ENCODE measurements at regions of chr6 and their contacts with region 1.

Region 1: GRCh38 chr6:116217069-116217468 is 36.8 kb downstream of the TSPYL4 start:
- DNase-seq: no peak
- ATAC-seq: peak; percentile 65

Region 2: DNA sequence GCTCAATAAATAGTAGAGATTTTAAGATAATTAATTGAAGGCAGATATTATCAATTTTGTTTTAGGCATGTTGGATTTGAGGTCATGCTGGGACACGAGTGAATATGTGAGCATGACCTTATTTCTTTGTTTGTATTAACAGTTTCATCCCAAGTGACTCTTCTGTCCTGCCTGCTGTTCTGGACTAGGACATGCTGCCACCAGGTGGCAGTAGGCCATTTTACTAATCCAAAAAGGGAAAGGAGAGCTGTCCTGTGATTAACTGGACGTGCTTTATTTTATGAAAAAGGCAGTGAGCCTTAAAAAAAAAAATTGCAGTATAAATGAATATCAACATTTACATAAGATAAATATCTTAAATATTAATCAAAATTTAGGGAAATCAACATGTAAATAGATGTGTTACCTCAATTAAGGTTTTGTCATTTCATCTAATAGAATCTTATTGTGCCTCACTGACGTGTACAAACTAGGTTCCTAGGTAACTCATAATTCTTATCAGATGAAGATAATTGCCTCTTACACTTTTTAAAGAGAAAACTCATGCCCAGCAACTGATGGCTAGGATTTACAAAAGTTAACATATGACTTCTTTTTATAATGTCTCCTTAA is 206.2 kb before region 1 on chr6:
- intact Hi-C with region 1: loop called (anchors 10 kb)
- DNase-seq: peak; percentile 79
- ATAC-seq: peak; percentile 73

Region 3: DNA sequence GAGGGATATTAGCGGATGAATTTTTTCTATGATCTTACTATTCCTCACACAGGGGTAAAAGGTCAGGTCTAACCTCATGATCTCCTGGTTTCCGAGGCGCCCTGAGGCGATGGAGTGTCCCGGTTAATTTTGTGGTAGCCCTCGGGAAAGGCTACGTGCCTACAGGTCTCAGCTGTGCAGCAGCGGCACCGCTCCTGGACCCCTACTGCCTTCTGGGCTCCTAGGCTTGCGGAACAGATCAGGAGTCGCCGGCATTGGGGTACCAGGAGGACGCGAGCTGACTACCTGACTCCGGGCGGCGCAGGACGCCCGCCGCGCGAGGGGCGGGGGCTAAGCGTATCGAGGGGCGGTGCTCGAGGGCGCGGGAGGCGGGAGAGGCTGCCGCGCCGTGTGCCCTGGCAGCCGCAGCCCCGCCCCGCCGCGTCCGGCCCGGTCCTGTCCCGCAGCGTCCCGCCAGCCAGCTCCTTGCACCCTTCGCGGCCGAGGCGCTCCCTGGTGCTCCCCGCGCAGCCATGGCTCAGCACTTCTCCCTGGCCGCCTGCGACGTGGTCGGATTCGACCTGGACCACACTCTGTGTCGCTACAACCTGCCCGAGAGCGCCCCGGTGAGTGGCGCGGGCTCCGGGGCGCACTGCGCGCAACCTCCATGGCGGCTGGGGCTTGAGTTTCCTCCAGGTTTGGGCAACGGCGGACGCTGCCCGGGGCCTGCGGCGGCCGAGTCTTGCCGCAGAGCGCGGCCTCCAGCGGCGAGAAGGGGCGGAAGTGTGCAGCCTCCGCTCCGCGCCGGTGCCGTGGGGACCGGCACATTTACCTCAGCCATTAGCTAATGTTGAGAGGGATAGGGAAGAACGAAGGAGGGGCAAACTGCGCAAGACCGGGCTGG is 116.4 kb before region 1 on chr6 and contains the start of gene NT5DC1:
- intact Hi-C with region 1: loop called (anchors 10 kb)
- DNase-seq: peak; percentile 93
- ATAC-seq: peak; percentile 97
- total RNA-seq, gene NT5DC1: 49.9 TPM

Region 4: DNA sequence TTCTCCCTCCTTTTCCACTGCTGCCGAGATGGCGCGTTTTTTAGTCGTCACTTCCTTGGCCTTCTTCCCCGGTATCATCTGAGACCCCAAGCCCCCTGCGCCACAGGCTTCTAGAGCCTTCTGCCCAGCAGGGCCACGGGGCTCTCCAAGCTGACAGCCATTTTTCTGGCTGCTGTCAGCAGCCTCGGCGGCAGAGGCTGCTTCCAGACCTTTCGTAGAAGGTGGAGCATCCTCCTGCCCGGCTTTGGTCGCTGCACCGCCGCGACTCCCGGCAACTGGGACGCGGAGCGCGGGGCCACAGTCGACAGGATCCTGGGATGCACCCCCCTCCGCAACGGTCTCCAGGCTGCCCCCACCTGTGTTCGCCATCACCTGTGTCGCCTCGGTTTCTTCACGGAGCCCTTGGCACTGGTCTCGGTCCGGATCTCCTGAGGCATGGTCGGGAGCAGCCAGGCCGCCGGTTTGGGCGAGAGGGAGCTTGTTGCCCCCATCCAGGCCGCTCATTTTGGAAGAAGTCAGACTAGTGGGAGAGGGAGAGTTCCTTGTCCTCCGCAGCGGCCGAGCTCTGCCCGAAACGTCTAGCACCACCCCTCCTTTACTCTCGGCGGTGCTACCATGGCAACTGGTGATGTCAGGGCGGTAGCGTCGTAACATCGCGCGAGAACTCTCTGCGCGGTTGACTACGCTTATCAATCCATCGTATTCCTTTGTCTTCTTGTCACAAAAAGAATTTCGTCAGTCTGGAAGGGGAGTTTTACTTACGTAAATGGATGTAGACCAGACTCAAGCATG is 36.6 kb after region 1 on chr6 and contains the start of gene TSPYL4:
- intact Hi-C with region 1: loop called (anchors 5 kb)
- DNase-seq: peak; percentile 97
- ATAC-seq: peak; percentile 98
- total RNA-seq, gene TSPYL4: 27.4 TPM